Esophagus muscularis mucosa (tissue), 4 donors: ENCODE measurements at regions of chrX and their contacts with region 1.

Region 1: GRCh38 chrX:21756785-21757529 is 959 bp downstream of the SMPX start:
- DNase-seq: no peak
- H3K4me3 ChIP-seq: peak overlapping the region; percentile 37 to 52 (median 48)
- H3K27ac ChIP-seq: peak overlapping the region; percentile 55 to 64 (median 58)
- H3K4me1 ChIP-seq: no peaks in the 10 kb centered on the region
- H3K27me3 ChIP-seq: no peaks in the 10 kb centered on the region
- CTCF ChIP-seq: peak in 1 of 3 experiments; percentile 24
- EP300 ChIP-seq: no peak
- POLR2A ChIP-seq: no peak

Region 2: DNA sequence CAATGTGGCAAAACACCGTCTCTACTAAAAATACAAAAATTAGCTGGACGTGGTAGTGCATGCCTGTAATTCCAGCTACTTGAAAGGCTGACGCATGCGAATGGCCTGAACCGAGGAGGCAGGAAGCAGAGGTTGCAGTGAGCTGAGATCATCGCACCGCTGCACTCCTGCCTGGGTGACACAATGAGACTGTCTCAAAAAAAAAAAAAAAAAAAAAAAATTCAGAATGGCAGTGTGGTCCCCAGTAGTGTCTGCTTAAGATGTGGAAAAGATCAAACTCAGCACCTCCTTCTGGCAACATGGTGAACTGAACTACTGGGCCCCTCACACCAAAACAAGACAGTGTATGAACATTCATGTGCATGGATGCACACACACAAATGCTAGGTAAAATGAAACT is 215.8 kb after region 1 on chrX:
- intact Hi-C with region 1: loop called (anchors 10 kb)
- DNase-seq: no peak
- H3K4me3 ChIP-seq: no peak overlapping the region
- H3K27ac ChIP-seq: no peak overlapping the region
- H3K4me1 ChIP-seq: peaks cover 0 to 18% (median 12%) of the 10 kb centered on the region in 4 donors
- H3K27me3 ChIP-seq: no peaks in the 10 kb centered on the region
- CTCF ChIP-seq: peak in 1 of 3 experiments; percentile 3
- EP300 ChIP-seq: no peak
- POLR2A ChIP-seq: no peak